Activated CD4-positive, alpha-beta T cell treated with anti-CD3 and anti-CD28 coated beads, Interleukin-2, amount 10 ng/mL, durations not matched to agents 24 days and 14 days (primary cell): ENCODE measurements at regions of chr7 and their contacts with region 1.

Region 1: DNA sequence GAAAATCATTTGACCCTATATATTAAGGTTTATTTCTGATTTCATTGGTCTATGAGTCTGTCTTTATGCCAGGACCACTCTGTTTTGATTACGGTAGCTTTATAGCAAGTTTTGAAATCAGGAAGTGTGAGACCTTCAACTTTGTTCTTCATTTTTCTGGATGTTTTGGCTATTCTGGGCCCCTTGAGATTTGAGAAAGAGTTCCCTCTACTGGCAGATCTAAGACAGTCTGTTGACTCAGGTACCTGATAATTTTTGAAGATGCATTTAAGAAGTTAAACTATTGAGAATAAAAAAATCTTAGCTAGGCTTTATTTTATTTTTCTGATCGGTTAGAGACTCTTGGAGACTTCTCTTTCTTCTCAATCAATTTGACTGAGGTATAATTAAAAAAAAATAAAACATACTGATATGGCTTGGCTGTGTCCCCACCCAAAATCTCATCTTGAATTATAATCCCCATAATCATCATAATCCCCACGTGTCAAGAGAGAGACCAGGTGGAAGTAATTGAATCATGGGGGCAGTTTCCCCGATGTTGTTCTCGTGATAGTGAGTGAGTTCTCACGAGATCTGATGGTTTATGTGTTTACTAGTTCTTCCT is 209.2 kb downstream of the SNX10 start:
- DNase-seq: no peak
- H3K4me3 Mint-ChIP-seq: no peak overlapping the region
- H3K27ac Mint-ChIP-seq: no peak overlapping the region
- H3K4me1 Mint-ChIP-seq: no peaks in the 10 kb centered on the region
- H3K27me3 Mint-ChIP-seq: peaks cover 5% of the 10 kb centered on the region

Region 2: DNA sequence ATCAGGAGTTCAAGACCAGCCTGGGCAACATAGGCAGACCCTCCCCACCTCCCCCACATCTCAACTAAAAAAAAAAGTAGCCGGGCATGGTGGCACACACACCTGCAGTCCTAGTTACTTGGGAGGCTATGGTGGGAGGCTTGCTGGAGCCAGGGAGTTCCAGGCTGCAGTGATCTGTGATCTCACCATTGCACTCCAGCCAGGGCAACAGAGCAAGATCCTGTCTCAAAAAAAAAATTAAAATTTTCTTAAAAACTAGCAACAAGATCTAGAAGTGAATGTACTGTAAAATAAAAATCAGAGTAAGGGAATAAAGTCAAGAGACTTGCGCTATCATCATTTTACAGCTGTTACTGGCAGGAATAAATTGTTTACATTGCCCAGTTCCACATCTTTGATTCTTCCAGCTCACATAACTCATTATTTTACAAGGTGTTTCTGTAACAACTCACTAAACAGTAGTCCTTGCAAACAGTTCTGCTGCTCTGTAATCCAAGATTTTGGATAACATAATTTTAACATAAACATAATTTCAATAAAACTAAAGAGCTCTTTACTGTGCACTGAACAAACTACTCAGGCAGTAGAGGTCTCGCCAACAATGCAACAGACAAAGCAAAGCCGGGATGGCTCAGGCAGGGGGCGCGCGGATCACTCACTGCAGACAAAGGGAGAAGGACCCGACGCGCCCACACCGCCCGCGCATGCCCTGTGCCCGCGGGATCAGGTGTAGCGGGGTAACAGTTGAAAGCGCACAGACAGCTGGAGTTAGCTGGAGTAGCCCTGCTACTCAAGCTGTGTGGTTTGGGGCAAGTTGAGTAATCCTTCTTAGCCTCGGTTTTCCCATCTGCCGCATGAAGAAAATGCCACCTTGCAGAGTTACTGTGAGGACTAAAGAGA is 422.2 kb before region 1 on chr7:
- intact Hi-C with region 1: loop called (anchors 10 kb)
- DNase-seq: peak; percentile 93
- H3K4me3 Mint-ChIP-seq: peak overlapping the region; percentile 5
- H3K27ac Mint-ChIP-seq: no peak overlapping the region
- H3K4me1 Mint-ChIP-seq: peaks cover 8% of the 10 kb centered on the region
- H3K27me3 Mint-ChIP-seq: peaks cover 71% of the 10 kb centered on the region

Region 3: DNA sequence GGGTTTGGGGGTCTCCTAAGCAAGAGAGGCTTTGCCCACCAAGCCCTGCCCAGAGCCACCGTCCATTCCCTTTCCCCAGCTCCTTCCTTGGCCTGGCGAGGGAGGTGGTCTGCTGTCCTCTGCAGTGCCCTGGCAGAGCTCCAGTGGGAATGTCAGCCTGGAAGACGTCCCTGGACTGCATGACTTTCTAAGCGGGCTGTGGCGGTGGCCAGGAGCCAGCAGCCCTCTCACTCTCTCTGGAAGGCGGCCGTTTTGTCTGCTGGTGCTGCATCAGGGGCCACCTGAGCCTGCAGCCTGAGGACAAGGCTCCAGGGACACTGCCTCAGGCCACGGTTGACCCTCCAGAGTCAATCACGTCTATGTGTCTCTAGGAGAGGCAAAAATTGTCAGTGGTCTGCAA is 92.5 kb after region 1 on chr7:
- intact Hi-C with region 1: no loop called
- DNase-seq: no peak
- H3K4me3 Mint-ChIP-seq: no peak overlapping the region
- H3K27ac Mint-ChIP-seq: no peak overlapping the region
- H3K4me1 Mint-ChIP-seq: no peaks in the 10 kb centered on the region
- H3K27me3 Mint-ChIP-seq: peaks cover 24% of the 10 kb centered on the region

Region 4: DNA sequence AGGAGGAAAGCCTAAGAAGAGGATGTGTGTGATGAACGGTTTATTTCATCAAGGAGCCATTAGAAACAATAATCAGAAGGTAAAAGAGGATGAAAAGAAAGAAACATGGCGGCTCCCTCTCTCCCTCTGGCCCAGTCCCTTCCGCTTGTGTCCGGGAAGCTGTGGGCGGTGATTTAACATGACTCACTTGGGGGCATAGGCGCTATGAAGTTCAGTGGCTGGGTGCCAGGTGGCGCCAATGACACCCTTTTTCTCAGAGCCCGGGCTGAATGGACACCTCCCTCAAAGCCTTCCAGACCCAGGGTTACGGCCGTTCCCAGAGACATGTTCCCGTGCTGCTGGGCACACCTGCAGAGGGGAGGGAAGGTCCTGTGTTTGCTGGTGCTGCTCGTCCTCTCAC is 119.5 kb after region 1 on chr7:
- intact Hi-C with region 1: no loop called
- DNase-seq: no peak
- H3K4me3 Mint-ChIP-seq: no peak overlapping the region
- H3K27ac Mint-ChIP-seq: no peak overlapping the region
- H3K4me1 Mint-ChIP-seq: no peaks in the 10 kb centered on the region
- H3K27me3 Mint-ChIP-seq: peaks cover 6% of the 10 kb centered on the region